ENCODE measurements at regions of chr4 and their contacts with region 1.

Region 1: DNA sequence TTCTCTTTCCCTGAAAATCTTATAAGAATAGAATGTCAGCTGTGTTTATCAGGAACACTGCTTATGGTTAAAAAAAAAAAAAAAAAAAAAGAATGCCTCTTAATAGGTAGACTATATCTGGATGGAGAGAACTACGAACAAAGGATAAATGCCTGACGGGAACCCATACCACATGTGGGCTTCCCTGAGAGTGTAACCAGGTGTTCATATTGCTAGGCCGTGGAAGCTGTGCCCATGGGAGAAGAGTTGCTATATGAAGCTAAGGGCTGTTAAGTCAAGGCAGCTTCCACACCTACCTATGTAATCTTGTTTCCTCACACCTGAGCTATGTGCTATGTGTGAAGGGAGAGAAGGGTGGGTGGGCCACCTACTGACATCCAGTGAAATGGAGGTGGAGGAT is 27.3 kb downstream of the TMEM184C start:
- DNase-seq: no peak

Region 2: DNA sequence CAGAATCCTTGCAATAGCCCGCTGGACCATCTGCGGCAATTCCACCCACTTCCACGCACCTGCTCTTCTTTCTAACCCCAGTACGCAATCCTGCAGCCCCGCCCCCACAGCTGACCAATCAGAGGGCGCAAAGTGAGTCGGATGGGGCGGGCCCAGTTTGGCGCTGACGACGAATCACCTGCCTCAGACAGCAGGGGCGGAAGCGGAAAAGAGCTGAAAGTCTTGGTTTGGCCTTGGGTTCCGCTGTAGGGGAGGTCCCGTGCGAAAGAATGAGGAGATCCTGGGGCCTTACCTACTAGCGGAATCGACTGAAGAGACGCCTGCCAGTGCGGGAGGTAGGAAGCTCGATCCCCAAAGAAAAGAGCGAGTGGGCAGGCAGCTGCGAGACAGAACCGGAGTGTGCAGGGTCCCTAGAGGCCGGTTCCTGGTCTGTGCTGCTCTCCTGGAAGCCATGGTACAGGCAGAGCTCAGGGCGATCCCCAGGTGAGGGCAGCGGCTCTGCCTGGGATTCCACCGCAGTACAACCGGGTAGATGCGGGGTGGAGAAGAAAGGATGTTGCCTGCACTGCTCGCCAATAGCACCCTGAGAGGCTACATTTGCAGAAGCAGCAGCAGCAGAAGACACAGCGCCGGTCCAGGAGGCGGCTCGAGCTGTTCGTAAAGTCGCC is 27.2 kb before region 1 on chr4 and contains the start of gene TMEM184C:
- intact Hi-C with region 1: loop called in 1 of 2 experiments (anchors 2 kb)
- DNase-seq: peak; percentile 99
- total RNA-seq, gene TMEM184C: 22.8 to 23.8 TPM